Endothelial cell of umbilical vein (primary cell): ENCODE measurements at regions of chr1 and their contacts with region 1.

Region 1: DNA sequence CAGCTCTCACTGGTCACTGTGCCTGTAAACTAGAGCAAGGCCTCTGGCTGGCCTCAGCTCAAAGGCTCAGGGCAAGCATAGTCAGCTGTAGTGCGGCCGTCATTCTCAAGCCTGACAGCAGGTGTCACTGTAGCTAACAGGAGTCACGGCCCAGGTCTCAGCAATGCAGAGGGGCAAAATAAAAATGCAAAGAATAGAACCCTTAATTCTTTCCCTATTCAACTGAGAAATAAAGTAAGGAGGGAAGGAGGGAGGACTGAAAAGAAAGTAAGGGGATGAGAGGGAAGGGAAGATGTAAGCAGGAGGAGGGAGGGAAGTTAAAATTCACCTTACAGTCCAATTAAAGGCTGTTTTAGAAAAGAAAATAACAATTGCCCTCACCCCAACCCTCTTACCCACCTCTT is 106.1 kb downstream of the KIAA0319L start:
- DNase-seq: peak; percentile 79
- H3K4me3 ChIP-seq: no peak overlapping the region
- H3K27ac ChIP-seq: no peak overlapping the region
- H3K4me1 ChIP-seq: peaks cover 19% of the 10 kb centered on the region
- H3K27me3 ChIP-seq: no peaks in the 10 kb centered on the region
- CTCF ChIP-seq: peak; percentile 87 to 89
- POLR2A ChIP-seq: no peak

Region 2: GRCh38 chr1:35379317-35380000 is 71.7 kb before region 1 on chr1:
- CTCF ChIA-PET with region 1: no interaction called
- POLR2A ChIA-PET with region 1: no interaction called
- dilution Hi-C with region 1: no loop called
- intact Hi-C with region 1: no loop called
- DNase-seq: no peak
- H3K4me3 ChIP-seq: no peak overlapping the region
- H3K27ac ChIP-seq: no peak overlapping the region
- H3K4me1 ChIP-seq: peaks cover 2% of the 10 kb centered on the region
- H3K27me3 ChIP-seq: no peaks in the 10 kb centered on the region
- CTCF ChIP-seq: no peak
- POLR2A ChIP-seq: no peak

Region 3: GRCh38 chr1:35475856-35476674 is 24.9 kb after region 1 on chr1:
- CTCF ChIA-PET with region 1: interaction called, 12 read pairs
- POLR2A ChIA-PET with region 1: interaction called, 14 read pairs
- dilution Hi-C with region 1: no loop called
- intact Hi-C with region 1: no loop called
- DNase-seq: no peak
- H3K4me3 ChIP-seq: no peak overlapping the region
- H3K27ac ChIP-seq: no peak overlapping the region
- H3K4me1 ChIP-seq: no peaks in the 10 kb centered on the region
- H3K27me3 ChIP-seq: no peaks in the 10 kb centered on the region
- CTCF ChIP-seq: no peak
- POLR2A ChIP-seq: no peak

Region 4: GRCh38 chr1:35505908-35506798 is 55.0 kb after region 1 on chr1:
- CTCF ChIA-PET with region 1: interaction called, 36 read pairs
- POLR2A ChIA-PET with region 1: no interaction called
- dilution Hi-C with region 1: no loop called
- intact Hi-C with region 1: loop called (anchors 2 kb)
- DNase-seq: peak; percentile 98
- H3K4me3 ChIP-seq: no peak overlapping the region
- H3K27ac ChIP-seq: peak overlapping the region; percentile 48
- H3K4me1 ChIP-seq: peaks cover 22% of the 10 kb centered on the region
- H3K27me3 ChIP-seq: no peaks in the 10 kb centered on the region
- CTCF ChIP-seq: no peak
- POLR2A ChIP-seq: peak; percentile 50

Region 5: DNA sequence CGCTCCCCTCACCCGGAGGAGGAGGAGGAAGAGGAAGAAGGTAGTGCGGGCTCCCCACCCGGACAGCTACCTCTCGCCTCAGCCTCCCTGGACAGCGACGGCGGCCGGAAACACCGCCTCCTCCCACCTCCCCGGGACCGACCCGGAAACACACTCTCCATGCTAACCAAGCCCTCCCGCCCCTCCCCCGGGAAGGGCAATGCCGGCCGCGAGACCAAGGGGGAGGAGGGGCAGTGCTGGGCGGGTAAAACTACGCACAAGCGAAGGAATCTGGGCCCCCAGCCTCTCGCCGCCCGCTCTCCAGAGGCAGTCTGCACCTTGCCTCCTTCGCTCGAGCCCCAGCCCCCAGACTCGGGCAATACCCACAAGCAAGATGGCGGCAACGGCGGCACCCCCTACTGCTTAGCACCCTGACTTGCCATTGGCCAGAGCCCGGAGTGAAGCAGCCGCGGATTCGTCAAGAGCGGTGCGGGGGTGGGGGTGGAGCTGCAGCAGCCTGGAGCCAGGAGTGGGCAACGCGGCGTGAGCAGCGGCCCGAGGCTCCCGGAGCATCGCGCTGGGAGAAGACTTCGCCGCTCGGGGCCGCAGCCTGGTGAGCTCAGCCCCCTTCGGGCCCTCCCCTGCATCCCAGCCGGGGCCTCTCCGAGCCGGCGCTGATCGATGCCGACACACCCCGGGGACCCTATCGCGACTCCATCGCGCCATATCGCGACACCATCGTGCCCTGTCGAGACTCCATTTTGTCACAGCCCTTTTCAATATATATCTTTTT is 106.4 kb after region 1 on chr1 and contains the starts of genes KIAA0319L and NCDN:
- CTCF ChIA-PET with region 1: interaction called, 155 read pairs
- POLR2A ChIA-PET with region 1: interaction called, 15 read pairs
- dilution Hi-C with region 1: no loop called
- intact Hi-C with region 1: loop called (anchors 2 kb)
- DNase-seq: peak; percentile 97
- H3K4me3 ChIP-seq: peak within 1 kb of the TSS; percentile 46 to 59 (median 53)
- H3K27ac ChIP-seq: peak within 1 kb of the TSS; percentile 65
- H3K4me1 ChIP-seq: peaks cover 6% of the 10 kb centered on the region
- H3K27me3 ChIP-seq: no peaks in the 10 kb centered on the region
- CTCF ChIP-seq: no peak
- POLR2A ChIP-seq: peak; percentile 89
- total RNA-seq, gene KIAA0319L: 43.4 and 45.3 TPM in 2 replicates
- total RNA-seq, gene NCDN: 22.0 and 22.3 TPM in 2 replicates

Region 6: GRCh38 chr1:35715568-35716002 is 264.5 kb after region 1 on chr1:
- CTCF ChIA-PET with region 1: interaction called, 33 read pairs
- POLR2A ChIA-PET with region 1: no interaction called
- dilution Hi-C with region 1: no loop called
- intact Hi-C with region 1: loop called (anchors 1 kb)
- DNase-seq: peak; percentile 65
- H3K4me3 ChIP-seq: no peak overlapping the region
- H3K27ac ChIP-seq: no peak overlapping the region
- H3K4me1 ChIP-seq: peaks cover 13% of the 10 kb centered on the region
- H3K27me3 ChIP-seq: no peaks in the 10 kb centered on the region
- CTCF ChIP-seq: peak; percentile 85 to 89
- POLR2A ChIP-seq: no peak

Region 7: GRCh38 chr1:35769759-35770446 is 318.8 kb after region 1 on chr1 and contains the start of gene CLSPN:
- CTCF ChIA-PET with region 1: interaction called, 38 read pairs
- POLR2A ChIA-PET with region 1: no interaction called
- dilution Hi-C with region 1: no loop called
- intact Hi-C with region 1: loop called (anchors 1 kb)
- DNase-seq: peak; percentile 97
- H3K4me3 ChIP-seq: peak within 1 kb of the TSS; percentile 39 to 71 (median 51)
- H3K27ac ChIP-seq: peak within 1 kb of the TSS; percentile 76
- H3K4me1 ChIP-seq: peaks cover 6% of the 10 kb centered on the region
- H3K27me3 ChIP-seq: no peaks in the 10 kb centered on the region
- CTCF ChIP-seq: no peak
- POLR2A ChIP-seq: peak; percentile 74
- total RNA-seq, gene CLSPN: 33.2 and 39.5 TPM in 2 replicates